SK-N-SH (cell line): ENCODE measurements at regions of chr3 and their contacts with region 1.

Region 1: GRCh38 chr3:133040696-133041523 is 2.7 kb downstream of the TMEM108 start:
- DNase-seq: peak; percentile 78
- H3K4me3 ChIP-seq: peak overlapping the region; percentile 26 to 27; a peak in 2 of 4 replicates
- H3K27ac ChIP-seq: peak overlapping the region in 1 of 2 experiments; percentile 74; a peak in 2 of 4 replicates
- H3K4me1 ChIP-seq: peaks cover 7 to 24% of the 10 kb centered on the region in 2 experiments; a peak in 3 of 4 replicates
- H3K27me3 ChIP-seq: peaks cover 7% of the 10 kb centered on the region; the same call in 1 of the 2 replicates
- CTCF ChIP-seq: peak; percentile 92
- EP300 ChIP-seq: no peak
- RAD21 ChIP-seq: peak; percentile 99

Region 2: GRCh38 chr3:132730891-132731580 is 309.9 kb before region 1 on chr3:
- CTCF ChIA-PET with region 1: interaction called, 64 read pairs
- POLR2A ChIA-PET with region 1: no interaction called
- DNase-seq: peak; percentile 46
- H3K4me3 ChIP-seq: no peak overlapping the region; a peak in 1 of 4 replicates
- H3K27ac ChIP-seq: no peak overlapping the region; a peak in 1 of 4 replicates
- H3K4me1 ChIP-seq: no peaks in the 10 kb centered on the region; a peak in 1 of 4 replicates
- H3K27me3 ChIP-seq: no peaks in the 10 kb centered on the region
- CTCF ChIP-seq: peak; percentile 68
- EP300 ChIP-seq: no peak
- RAD21 ChIP-seq: peak; percentile 96

Region 3: GRCh38 chr3:133124511-133124910 is 83.6 kb after region 1 on chr3:
- CTCF ChIA-PET with region 1: interaction called, 26 read pairs
- POLR2A ChIA-PET with region 1: no interaction called
- DNase-seq: peak; percentile 58
- H3K4me3 ChIP-seq: peak overlapping the region in 1 of 2 experiments; percentile 28; a peak in 1 of 4 replicates
- H3K27ac ChIP-seq: peak overlapping the region in 1 of 2 experiments; percentile 98; a peak in 3 of 4 replicates
- H3K4me1 ChIP-seq: peaks cover 0 to 20% of the 10 kb centered on the region in 2 experiments; a peak in 2 of 4 replicates
- H3K27me3 ChIP-seq: no peaks in the 10 kb centered on the region
- CTCF ChIP-seq: no peak
- EP300 ChIP-seq: peak in 1 of 2 experiments; percentile 81; a peak in 2 of 4 replicates
- RAD21 ChIP-seq: peak; percentile 15; the same call in 1 of the 2 replicates

Region 4: DNA sequence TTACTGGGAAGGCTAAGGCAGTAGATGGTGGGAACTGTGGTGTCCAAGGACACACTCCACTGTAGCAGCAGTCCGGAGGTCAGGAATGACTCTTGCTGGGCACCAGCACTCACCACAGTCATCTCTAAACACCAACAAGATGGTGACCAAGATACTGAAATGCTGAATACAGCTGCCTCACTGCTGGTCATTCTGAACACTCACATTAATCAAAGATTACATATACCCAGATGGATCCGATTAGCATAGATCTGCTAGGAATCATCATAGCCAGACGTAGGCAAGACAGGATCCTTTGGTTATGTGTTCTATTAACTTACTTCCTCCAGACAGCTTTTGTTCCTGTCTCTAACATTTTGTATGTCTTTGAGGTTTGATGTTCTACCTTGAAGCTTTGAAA is 224.0 kb after region 1 on chr3:
- CTCF ChIA-PET with region 1: interaction called, 25 read pairs
- POLR2A ChIA-PET with region 1: no interaction called
- DNase-seq: peak; percentile 35
- H3K4me3 ChIP-seq: no peak overlapping the region
- H3K27ac ChIP-seq: peak overlapping the region; percentile 58 to 97; a peak in 3 of 4 replicates
- H3K4me1 ChIP-seq: peaks cover 4 to 53% of the 10 kb centered on the region in 2 experiments; a peak in 2 of 4 replicates
- H3K27me3 ChIP-seq: no peaks in the 10 kb centered on the region
- CTCF ChIP-seq: no peak
- EP300 ChIP-seq: peak; percentile 79 to 92
- RAD21 ChIP-seq: 0 out of 2 replicates have a peak, but pooled peaks have one; percentile 3

Region 5: DNA sequence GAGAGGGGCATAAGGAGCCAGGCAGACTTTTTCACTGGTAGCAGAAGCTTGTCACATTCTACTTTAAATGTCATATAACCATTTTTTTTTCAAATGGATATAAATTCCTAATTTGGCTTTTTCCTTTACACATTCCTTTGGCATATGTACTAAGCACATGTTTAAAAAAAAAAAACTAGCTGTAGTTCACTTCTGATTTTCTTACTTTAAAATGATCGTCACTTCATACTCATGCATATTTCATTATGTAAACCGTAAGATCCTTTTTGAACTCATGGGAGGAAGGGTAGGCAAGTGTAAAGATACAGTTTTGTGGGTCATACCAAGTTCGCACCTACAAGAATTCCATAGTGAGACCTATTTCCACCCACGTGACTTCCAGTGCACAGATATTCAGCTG is 313.8 kb after region 1 on chr3:
- CTCF ChIA-PET with region 1: interaction called, 10 read pairs
- POLR2A ChIA-PET with region 1: no interaction called
- DNase-seq: no peak
- H3K4me3 ChIP-seq: no peak overlapping the region
- H3K27ac ChIP-seq: no peak overlapping the region
- H3K4me1 ChIP-seq: peaks cover 0 to 11% of the 10 kb centered on the region in 2 experiments; a peak in 2 of 4 replicates
- H3K27me3 ChIP-seq: no peaks in the 10 kb centered on the region
- CTCF ChIP-seq: no peak
- EP300 ChIP-seq: no peak
- RAD21 ChIP-seq: no peak

Region 6: DNA sequence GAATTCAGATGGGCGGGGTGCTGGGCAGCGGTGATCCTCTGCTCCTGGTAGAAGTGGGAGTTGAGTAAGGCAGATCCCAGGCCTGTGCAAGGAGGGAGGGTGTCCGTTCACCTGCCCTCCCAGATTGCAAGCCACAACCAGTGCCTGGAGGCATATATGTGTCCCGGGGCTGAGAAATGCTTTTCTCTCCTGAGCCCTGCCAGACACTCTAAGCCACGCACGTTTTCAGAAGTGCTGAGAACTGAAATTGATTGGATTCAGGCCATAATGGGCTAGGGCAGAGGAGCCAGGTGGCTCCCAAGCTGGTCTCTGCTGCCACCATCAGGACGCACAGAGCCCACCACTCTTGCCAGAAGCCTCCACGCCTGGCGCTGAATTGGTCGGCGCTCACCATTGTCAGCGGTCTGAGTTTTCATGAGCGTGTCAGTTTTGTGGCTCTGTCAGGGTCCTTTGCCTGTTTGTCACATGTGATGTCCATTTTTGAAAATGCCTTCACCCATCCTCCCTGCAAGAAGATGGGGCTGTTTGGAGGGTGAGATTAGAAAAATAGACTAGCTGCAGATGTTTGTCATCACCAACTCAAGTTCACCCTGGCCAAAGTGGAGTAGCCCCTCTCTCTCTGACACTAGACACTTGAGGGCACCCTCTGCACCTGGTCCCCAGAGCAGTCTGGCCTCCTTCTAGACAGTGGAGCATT is 343.6 kb after region 1 on chr3:
- CTCF ChIA-PET with region 1: interaction called, 178 read pairs
- POLR2A ChIA-PET with region 1: interaction called, 5 read pairs
- DNase-seq: peak; percentile 88
- H3K4me3 ChIP-seq: peak overlapping the region in 1 of 2 experiments; percentile 53; a peak in 1 of 4 replicates
- H3K27ac ChIP-seq: peak overlapping the region in 1 of 2 experiments; percentile 82; a peak in 2 of 4 replicates
- H3K4me1 ChIP-seq: peaks cover 0 to 53% of the 10 kb centered on the region in 2 experiments; a peak in 2 of 4 replicates
- H3K27me3 ChIP-seq: no peaks in the 10 kb centered on the region
- CTCF ChIP-seq: peak; percentile 88
- EP300 ChIP-seq: peak in 1 of 2 experiments; percentile 70; a peak in 2 of 4 replicates
- RAD21 ChIP-seq: peak; percentile 99

Region 7: DNA sequence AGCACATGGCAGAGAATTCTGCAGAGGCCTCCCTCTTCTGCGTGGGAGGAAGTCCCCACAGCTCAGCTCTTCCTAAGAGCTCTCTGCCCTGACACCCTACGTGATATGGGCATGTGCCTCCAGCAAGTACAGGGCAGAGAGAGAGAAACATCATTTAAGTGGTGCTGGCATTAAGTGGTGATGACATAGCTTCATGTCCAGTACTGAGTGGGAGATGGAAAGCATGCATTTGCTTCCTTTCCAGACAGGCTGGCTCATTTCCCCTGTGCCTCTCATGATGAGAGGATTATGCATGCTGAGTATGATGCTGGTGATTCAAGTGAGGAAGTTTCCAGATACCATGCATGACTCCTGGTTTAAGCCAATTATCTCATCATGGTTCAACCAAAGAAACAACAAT is 385.8 kb after region 1 on chr3:
- CTCF ChIA-PET with region 1: interaction called, 25 read pairs
- POLR2A ChIA-PET with region 1: no interaction called
- DNase-seq: no peak
- H3K4me3 ChIP-seq: no peak overlapping the region
- H3K27ac ChIP-seq: no peak overlapping the region
- H3K4me1 ChIP-seq: peaks cover 3 to 12% of the 10 kb centered on the region in 2 experiments; a peak in 2 of 4 replicates
- H3K27me3 ChIP-seq: no peaks in the 10 kb centered on the region
- CTCF ChIP-seq: no peak
- EP300 ChIP-seq: no peak
- RAD21 ChIP-seq: no peak